ENCODE measurements at regions of chr1 and their contacts with region 1.

Region 1: GRCh38 chr1:227482023-227482299 is 81.4 kb upstream of the ZNF678 start:
- DNase-seq: no peak
- ATAC-seq: no peak

Region 2: GRCh38 chr1:226397011-226397926 is 1084.7 kb before region 1 on chr1:
- intact Hi-C with region 1: no loop called
- DNase-seq: no peak
- ATAC-seq: peak; percentile 66 to 86

Region 3: GRCh38 chr1:227542143-227543120 is 60.5 kb after region 1 on chr1:
- intact Hi-C with region 1: loop called in 1 of 2 experiments (anchors 2 kb)
- DNase-seq: peak; percentile 91
- ATAC-seq: peak; percentile 96 to 97

Region 4: DNA sequence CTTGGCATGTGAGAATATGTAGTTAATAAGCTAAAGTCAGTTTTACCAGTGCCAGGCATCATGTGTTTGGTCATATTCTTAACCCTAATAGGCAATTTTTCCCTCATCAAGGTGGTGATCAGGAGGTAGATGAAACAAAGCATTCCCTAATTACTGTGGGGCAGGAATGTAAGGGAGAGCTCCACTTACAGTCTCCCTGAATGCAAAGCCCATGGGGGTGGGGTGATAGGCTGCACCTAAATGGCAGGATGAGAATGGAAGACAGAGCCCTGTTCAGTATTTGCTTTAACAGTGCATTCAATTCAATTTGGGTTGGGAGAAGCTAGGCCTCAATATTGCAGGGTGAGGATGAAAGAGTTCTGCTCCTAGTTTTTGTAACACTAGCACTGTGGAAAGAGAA is 104.8 kb after region 1 on chr1:
- intact Hi-C with region 1: no loop called
- DNase-seq: no peak
- ATAC-seq: no peak

Region 5: GRCh38 chr1:227632325-227632724 is 150.4 kb after region 1 on chr1:
- intact Hi-C with region 1: no loop called
- DNase-seq: no peak
- ATAC-seq: no peak

Region 6: GRCh38 chr1:227946624-227947385 is 464.8 kb after region 1 on chr1:
- intact Hi-C with region 1: loop called (anchors 2 to 5 kb)
- DNase-seq: peak; percentile 78
- ATAC-seq: peak; percentile 80 to 86